CD4-positive, alpha-beta T cell (primary cell): ENCODE measurements at regions of chr1 and their contacts with region 1.

Region 1: DNA sequence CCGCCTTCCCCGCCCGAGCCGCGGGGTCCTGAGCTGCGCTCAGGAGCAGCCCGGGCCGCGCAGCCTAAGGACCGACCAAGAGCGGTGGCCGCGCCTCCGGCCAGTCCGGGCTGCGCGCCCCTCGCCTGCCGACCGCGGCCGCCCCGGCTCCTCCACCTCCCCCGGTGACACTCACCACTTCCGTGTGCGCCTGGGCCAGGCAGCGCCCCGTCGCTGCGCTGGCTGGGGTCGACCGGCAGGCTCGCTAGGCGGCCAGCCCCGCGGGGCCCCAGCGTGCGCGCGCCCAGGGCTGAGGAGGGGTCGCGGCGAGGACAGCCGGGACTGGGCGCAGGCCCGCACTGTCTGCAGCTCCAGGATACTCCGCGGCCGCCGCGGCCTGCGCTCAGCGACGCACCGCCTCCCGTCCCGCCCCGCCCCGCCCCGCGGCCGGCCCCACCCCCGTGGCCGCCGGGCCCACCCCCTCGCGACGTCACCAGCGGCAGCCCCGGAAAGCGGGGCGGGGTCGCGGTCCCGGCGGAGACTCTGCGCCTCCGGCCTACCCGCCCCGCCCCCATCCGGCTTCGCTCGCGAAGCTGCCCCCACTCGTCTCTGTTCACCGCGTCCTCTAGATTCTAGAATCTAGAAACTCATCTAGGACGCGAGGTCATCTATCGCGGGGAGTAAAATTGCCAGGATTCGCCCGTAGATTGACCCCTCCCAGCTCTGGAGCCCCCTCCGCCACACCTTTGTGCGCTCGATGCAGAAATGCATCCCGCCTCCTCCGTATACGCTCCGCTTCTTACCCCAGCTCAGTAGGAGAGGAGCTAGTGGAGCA is at the start of gene JAK1:
- DNase-seq: peak; percentile 80 to 96 (median 91)
- ATAC-seq: peak; percentile 78
- H3K4me3 ChIP-seq: peak within 1 kb of the TSS; percentile 89
- H3K4me3 Mint-ChIP-seq: peak within 1 kb of the TSS; percentile 98
- H3K27ac ChIP-seq: peak within 1 kb of the TSS; percentile 84 to 96
- H3K27ac Mint-ChIP-seq: peak within 1 kb of the TSS; percentile 97
- H3K4me1 ChIP-seq: peaks cover 38% of the 10 kb centered on the region
- H3K4me1 Mint-ChIP-seq: peaks cover 56% of the 10 kb centered on the region
- H3K27me3 ChIP-seq: no peaks in the 10 kb centered on the region
- H3K27me3 Mint-ChIP-seq: no peaks in the 10 kb centered on the region
- CTCF ChIP-seq: no peak
- total RNA-seq, gene JAK1: 240 to 252 TPM

Region 2: GRCh38 chr1:64864018-64864940 is 102.1 kb before region 1 on chr1:
- CTCF ChIA-PET with region 1: no interaction called
- POLR2A ChIA-PET with region 1: interaction called, 13 read pairs
- intact Hi-C with region 1: no loop called
- DNase-seq: peak in 13 of 14 experiments; percentile 11 to 92 (median 36)
- ATAC-seq: peak; percentile 76
- H3K4me3 ChIP-seq: no peak overlapping the region
- H3K4me3 Mint-ChIP-seq: peak overlapping the region; percentile 0
- H3K27ac ChIP-seq: peak overlapping the region in 1 of 2 donors; percentile 68
- H3K27ac Mint-ChIP-seq: peak overlapping the region; percentile 68
- H3K4me1 ChIP-seq: peaks cover 31% of the 10 kb centered on the region
- H3K4me1 Mint-ChIP-seq: peaks cover 56% of the 10 kb centered on the region
- H3K27me3 ChIP-seq: no peaks in the 10 kb centered on the region
- H3K27me3 Mint-ChIP-seq: no peaks in the 10 kb centered on the region
- CTCF ChIP-seq: no peak

Region 3: DNA sequence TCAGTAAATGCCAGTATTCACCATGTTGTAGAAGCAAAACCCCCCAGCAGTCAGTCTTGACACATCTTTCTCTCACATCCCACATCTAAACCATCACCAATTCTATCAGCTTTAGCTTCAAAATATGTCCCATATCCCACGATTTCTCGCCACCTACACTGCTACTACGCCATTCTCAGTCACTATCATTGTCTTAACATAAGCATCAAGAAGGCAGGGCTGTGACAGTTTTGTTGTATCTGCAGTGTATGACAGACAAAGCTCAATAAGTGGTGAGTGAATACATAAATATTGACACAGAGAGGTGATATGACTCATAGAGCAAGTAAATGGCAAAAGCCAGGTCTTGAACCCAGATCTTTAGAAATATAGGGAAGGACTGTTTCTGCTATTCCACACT is 59.9 kb before region 1 on chr1:
- CTCF ChIA-PET with region 1: no interaction called
- POLR2A ChIA-PET with region 1: interaction called, 11 read pairs
- intact Hi-C with region 1: no loop called
- DNase-seq: no peak
- ATAC-seq: no peak
- H3K4me3 ChIP-seq: no peak overlapping the region
- H3K4me3 Mint-ChIP-seq: peak overlapping the region; percentile 26
- H3K27ac ChIP-seq: no peak overlapping the region
- H3K27ac Mint-ChIP-seq: peak overlapping the region; percentile 29
- H3K4me1 ChIP-seq: peaks cover 35% of the 10 kb centered on the region
- H3K4me1 Mint-ChIP-seq: peaks cover 97% of the 10 kb centered on the region
- H3K27me3 ChIP-seq: no peaks in the 10 kb centered on the region
- H3K27me3 Mint-ChIP-seq: no peaks in the 10 kb centered on the region
- CTCF ChIP-seq: no peak

Region 4: DNA sequence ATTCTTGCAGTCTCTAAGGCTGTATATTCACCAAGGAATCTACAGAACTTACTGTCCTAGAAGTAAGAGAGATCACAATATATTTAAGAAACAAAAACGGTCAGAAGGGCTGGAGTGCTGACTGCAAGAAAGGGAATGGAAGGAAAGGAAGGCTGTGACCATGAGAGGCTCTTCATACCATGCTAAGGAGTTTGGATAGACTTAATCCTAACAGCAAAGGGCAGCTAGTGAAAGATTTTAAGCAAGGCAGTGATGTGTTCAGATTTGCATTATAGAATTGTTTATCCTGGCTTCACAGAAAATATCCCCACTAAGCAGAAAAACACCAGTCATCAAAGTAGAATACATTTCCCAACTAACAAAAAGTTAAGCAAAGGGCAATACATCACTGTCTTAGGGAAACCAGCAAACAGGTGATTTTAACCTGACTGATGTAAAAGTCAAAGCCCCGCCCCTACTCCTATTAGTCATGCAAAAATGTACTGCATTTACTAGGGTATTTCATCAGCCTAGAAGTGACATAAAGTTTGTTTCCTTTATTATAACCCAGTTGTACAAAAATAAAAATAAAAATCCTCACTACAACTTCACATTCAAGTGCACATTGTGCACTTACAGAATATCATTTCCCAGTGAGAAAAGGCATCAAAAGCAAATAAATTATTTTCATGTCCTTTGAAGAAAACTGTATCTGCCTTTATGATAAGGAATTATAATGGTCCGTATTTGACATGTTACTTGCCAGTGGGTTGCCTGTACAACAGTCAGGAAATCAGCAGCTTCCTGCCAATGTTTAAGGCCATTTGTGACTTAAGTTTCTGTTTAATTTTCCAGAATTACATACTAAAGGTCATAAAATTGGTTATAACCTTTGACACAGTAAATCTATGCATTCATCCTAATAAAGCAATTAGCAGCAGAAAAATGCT is 17.2 kb before region 1 on chr1:
- CTCF ChIA-PET with region 1: interaction called, 3 read pairs
- POLR2A ChIA-PET with region 1: interaction called, 13 read pairs
- intact Hi-C with region 1: loop called in 1 of 2 experiments (anchors 2 kb)
- DNase-seq: peak in 4 of 14 experiments; percentile 17 to 65 (median 60)
- ATAC-seq: peak; percentile 87
- H3K4me3 ChIP-seq: no peak overlapping the region
- H3K4me3 Mint-ChIP-seq: peak overlapping the region; percentile 67
- H3K27ac ChIP-seq: peak overlapping the region in 1 of 2 donors; percentile 13
- H3K27ac Mint-ChIP-seq: peak overlapping the region; percentile 75
- H3K4me1 ChIP-seq: peaks cover 48% of the 10 kb centered on the region
- H3K4me1 Mint-ChIP-seq: peaks cover 89% of the 10 kb centered on the region
- H3K27me3 ChIP-seq: no peaks in the 10 kb centered on the region
- H3K27me3 Mint-ChIP-seq: no peaks in the 10 kb centered on the region
- CTCF ChIP-seq: no peak

Region 5: GRCh38 chr1:65059930-65060538 is 93.7 kb after region 1 on chr1:
- CTCF ChIA-PET with region 1: interaction called, 3 read pairs
- POLR2A ChIA-PET with region 1: interaction called, 48 read pairs
- intact Hi-C with region 1: loop called in 1 of 2 experiments (anchors 5 kb)
- DNase-seq: peak in 3 of 14 experiments; percentile 40 to 62 (median 61)
- ATAC-seq: peak; percentile 60
- H3K4me3 ChIP-seq: no peak overlapping the region
- H3K4me3 Mint-ChIP-seq: peak overlapping the region; percentile 1
- H3K27ac ChIP-seq: no peak overlapping the region
- H3K27ac Mint-ChIP-seq: peak overlapping the region; percentile 70
- H3K4me1 ChIP-seq: peaks cover 11% of the 10 kb centered on the region
- H3K4me1 Mint-ChIP-seq: peaks cover 63% of the 10 kb centered on the region
- H3K27me3 ChIP-seq: no peaks in the 10 kb centered on the region
- H3K27me3 Mint-ChIP-seq: no peaks in the 10 kb centered on the region
- CTCF ChIP-seq: peak; percentile 69

Region 6: GRCh38 chr1:65355031-65355712 is 388.8 kb after region 1 on chr1:
- CTCF ChIA-PET with region 1: no interaction called
- POLR2A ChIA-PET with region 1: no interaction called
- intact Hi-C with region 1: no loop called
- DNase-seq: no peak
- ATAC-seq: no peak
- H3K4me3 ChIP-seq: no peak overlapping the region
- H3K4me3 Mint-ChIP-seq: no peak overlapping the region
- H3K27ac ChIP-seq: no peak overlapping the region
- H3K27ac Mint-ChIP-seq: no peak overlapping the region
- H3K4me1 ChIP-seq: no peaks in the 10 kb centered on the region
- H3K4me1 Mint-ChIP-seq: no peaks in the 10 kb centered on the region
- H3K27me3 ChIP-seq: peaks cover 0 to 4% of the 10 kb centered on the region in 2 experiments
- H3K27me3 Mint-ChIP-seq: peaks cover 7% of the 10 kb centered on the region
- CTCF ChIP-seq: no peak

Region 7: DNA sequence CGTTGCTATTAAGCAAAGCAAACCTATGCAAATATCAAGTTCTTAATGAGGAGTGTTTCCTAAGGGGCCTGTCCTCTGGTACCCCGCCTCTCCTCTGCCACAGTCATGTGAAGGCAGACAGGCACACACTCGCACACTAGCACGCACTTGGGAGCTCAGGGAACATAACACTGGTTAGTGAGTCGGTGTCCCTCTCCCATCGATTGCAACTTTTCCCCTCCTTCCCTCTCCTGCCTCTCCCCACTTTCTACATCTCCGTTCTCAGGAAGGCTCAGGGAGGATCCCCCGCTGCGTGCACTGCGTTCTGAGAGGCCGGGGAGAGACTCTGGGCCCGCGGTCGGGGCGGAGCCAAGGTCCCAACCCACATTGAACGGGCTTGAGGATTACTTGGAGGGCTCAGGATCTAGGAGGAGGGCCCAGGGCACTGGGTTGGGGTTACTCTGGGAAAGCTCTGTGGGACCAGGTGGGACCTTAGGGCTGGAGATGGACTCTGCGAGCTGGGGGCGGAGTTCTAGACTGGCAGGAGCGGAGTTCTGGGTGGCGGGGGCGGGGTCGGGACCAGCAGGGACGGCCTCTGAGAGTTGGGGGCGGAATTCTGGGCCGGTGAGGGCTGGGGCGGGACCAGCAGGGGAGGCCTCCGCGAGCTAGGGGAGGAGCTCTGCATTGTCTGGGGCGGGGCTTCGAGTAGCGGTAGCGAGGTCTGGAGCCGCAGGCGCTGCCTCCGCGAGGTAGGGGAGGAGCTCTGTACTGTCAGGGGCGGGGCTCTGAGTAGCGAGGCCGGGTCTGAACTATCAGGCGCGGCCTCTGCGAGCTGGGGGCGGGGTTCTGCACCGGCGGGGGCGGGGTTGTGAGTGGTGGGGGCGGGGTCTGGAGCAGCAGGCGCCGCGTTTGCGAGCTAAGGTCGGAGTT is 453.6 kb after region 1 on chr1:
- CTCF ChIA-PET with region 1: no interaction called
- POLR2A ChIA-PET with region 1: interaction called, 8 read pairs
- intact Hi-C with region 1: loop called in 1 of 2 experiments (anchors 2 kb)
- DNase-seq: peak; percentile 98 to 99 (median 99)
- ATAC-seq: peak; percentile 93
- H3K4me3 ChIP-seq: peak overlapping the region; percentile 86
- H3K4me3 Mint-ChIP-seq: no peak overlapping the region
- H3K27ac ChIP-seq: peak overlapping the region; percentile 64 to 69
- H3K27ac Mint-ChIP-seq: no peak overlapping the region
- H3K4me1 ChIP-seq: peaks cover 26% of the 10 kb centered on the region
- H3K4me1 Mint-ChIP-seq: peaks cover 26% of the 10 kb centered on the region
- H3K27me3 ChIP-seq: no peaks in the 10 kb centered on the region
- H3K27me3 Mint-ChIP-seq: no peaks in the 10 kb centered on the region
- CTCF ChIP-seq: no peak